Right ventricle myocardium inferior (tissue), 1 donor: ENCODE measurements at regions of chr13 and their contacts with region 1.

Region 1: DNA sequence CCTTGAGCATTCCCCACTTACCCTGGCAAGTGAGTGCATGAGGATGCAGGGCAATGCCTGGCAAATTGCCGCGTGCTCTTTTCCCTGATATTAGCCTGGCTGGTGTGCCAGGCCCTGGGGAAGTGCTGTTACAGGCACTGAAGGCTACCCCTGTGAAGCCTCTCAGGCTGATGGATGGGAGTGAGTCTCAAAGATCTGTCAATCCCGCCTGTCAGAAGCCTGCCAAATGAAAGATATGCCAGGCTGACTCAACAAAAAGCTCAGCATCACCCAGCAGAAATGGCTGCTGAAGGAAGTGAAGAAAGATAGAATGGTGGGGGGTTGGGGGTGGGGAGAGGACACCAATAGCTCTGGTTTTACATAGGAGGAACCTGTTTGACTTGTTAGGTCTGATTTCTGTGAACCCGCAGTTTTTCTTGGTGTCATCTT is 112.1 kb downstream of the LACC1 start:
- DNase-seq: peak; percentile 80
- ATAC-seq: peak; percentile 86

Region 2: GRCh38 chr13:44108331-44108858 is 116.6 kb after region 1 on chr13:
- intact Hi-C with region 1: loop called (anchors 2 kb)
- DNase-seq: peak; percentile 69
- ATAC-seq: peak; percentile 88

Region 3: DNA sequence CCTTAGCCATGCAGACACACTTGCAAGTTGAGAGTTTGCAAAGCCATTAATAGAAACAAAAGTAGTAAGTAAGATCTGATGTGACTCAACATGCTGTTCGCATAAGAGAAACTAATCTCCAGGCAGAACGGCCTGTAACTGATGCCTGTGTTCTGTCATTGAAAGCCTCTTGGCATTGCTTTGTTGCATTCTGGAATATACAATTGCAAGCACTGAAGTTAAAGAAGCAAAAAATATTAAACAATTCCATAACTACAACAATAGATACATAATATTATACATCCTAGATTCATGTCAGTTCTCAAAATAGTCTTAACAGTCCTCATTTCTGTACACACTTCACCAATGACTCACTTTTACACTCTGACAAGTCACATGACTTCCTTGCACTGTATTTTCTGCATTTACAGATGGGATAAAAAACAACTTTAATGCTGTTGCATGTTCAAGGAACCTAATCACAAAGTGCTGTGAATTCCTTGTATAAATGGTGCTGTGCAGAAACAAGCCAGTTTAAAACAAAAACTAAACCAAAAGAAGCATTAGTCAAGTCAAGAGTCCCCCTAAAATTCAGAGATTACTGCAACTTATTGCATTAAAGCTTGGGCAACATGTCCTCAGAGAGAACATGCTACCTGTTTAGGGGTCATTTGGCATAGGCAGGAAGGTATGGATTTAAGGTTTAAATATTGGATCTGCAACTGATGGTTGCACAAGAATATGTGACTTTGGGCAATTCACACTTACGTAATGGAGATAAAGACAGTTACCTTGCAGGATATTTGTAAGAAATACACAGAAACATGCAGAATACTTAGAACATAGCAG is 302.3 kb after region 1 on chr13:
- intact Hi-C with region 1: loop called (anchors 5 kb)
- DNase-seq: no peak
- ATAC-seq: peak; percentile 38